AG04450 (cell line): ENCODE measurements at regions of chr1 and their contacts with region 1.

Region 1: DNA sequence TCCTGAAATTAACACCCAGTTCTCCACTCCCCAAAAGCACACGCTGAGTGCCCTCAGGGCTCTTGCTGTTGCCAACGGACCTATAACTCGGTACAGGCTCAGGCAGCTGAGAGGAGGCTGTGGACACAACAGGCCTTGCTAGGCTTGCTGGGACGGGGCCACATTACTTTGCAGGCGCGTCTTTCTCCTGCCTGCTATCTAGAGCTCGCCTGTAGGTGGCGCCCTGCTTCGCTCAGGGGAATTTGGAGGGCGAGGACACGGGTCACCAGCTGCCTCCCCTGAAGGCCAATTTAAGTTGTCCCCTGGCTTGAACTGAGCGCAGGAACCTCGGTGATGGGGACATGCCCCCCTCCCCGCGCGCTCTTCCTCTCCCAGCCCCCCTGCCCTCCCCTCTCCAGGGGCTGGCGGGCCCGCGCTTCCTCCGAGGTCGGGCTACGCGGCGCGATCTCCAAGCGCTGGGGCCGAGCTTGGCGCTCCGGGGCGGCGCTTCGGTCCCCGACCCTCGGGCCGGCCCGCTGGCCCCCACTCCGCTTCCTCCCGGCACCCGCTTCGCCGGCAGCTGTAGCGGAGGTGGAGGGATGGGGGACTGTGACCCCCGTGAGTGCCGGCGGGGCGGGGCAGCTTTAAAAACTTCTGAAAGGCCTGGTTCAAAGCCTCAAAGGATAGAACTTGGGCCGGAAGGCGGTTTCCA is 32.4 kb upstream of the NFIA start:
- DNase-seq: peak; percentile 46
- H3K4me3 ChIP-seq: peak overlapping the region; percentile 64
- H3K27ac ChIP-seq: no peak overlapping the region
- H3K27me3 ChIP-seq: peaks cover 41% of the 10 kb centered on the region
- CTCF ChIP-seq: peak; percentile 97

Region 2: GRCh38 chr1:60564916-60565750 is 484.9 kb before region 1 on chr1:
- CTCF ChIA-PET with region 1: no interaction called
- POLR2A ChIA-PET with region 1: no interaction called
- DNase-seq: no peak
- H3K4me3 ChIP-seq: no peak overlapping the region
- H3K27ac ChIP-seq: no peak overlapping the region
- H3K27me3 ChIP-seq: no peaks in the 10 kb centered on the region
- CTCF ChIP-seq: no peak

Region 3: DNA sequence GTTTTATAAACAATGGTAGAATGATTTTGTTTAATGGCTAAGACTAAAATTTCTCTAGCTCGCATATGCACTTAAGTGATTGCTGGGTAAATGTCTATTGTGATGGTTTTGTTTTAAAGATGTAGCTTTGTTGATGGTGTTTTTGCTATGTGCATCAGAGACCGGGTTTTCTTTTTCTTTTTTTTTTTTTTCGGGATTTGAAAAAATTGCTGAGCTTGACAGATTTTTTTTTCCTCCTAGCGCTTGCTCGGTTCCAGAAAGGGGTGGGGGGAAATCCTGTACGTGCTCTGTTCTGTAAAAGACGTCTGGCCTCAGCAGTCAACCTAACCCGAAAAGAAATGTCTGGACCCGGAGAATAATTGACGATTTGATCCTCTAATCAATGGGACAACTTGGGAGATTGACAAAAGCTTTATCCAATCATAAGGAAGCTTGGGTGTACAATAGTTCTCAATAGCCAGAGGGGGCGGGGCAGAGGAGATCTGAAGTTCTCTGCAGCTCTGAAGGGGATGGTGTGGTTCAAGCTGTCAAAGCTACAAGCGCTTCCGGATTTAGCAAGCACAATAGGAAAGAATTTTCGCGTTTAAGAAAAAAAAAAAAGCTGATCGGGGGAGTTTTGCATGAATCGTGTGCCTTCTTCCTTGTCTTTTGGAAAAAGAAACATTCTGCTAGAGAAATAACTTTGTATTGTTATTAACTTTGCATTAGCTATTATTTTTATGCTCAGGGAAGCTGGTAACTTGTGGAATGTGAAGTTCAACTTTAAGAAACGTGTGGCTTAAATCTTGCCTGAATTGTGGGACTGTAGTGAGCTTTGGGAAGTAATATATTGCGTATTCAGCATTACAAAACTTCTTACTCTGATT is 27.9 kb after region 1 on chr1:
- CTCF ChIA-PET with region 1: interaction called, 49 read pairs
- POLR2A ChIA-PET with region 1: interaction called, 8 read pairs
- DNase-seq: peak; percentile 99
- H3K4me3 ChIP-seq: peak overlapping the region; percentile 69
- H3K27ac ChIP-seq: no peak overlapping the region
- H3K27me3 ChIP-seq: peaks cover under 1% of the 10 kb centered on the region
- CTCF ChIP-seq: no peak

Region 4: GRCh38 chr1:61141288-61142042 is 91.5 kb after region 1 on chr1:
- CTCF ChIA-PET with region 1: interaction called, 12 read pairs
- POLR2A ChIA-PET with region 1: no interaction called
- DNase-seq: no peak
- H3K4me3 ChIP-seq: no peak overlapping the region
- H3K27ac ChIP-seq: no peak overlapping the region
- H3K27me3 ChIP-seq: no peaks in the 10 kb centered on the region
- CTCF ChIP-seq: no peak

Region 5: GRCh38 chr1:61337981-61338848 is 288.2 kb after region 1 on chr1:
- CTCF ChIA-PET with region 1: interaction called, 32 read pairs
- POLR2A ChIA-PET with region 1: no interaction called
- DNase-seq: no peak
- H3K4me3 ChIP-seq: no peak overlapping the region
- H3K27ac ChIP-seq: no peak overlapping the region
- H3K27me3 ChIP-seq: peaks cover 25% of the 10 kb centered on the region
- CTCF ChIP-seq: peak; percentile 62